AG04450 (cell line): ENCODE measurements at regions of chr12 and their contacts with region 1.

Region 1: DNA sequence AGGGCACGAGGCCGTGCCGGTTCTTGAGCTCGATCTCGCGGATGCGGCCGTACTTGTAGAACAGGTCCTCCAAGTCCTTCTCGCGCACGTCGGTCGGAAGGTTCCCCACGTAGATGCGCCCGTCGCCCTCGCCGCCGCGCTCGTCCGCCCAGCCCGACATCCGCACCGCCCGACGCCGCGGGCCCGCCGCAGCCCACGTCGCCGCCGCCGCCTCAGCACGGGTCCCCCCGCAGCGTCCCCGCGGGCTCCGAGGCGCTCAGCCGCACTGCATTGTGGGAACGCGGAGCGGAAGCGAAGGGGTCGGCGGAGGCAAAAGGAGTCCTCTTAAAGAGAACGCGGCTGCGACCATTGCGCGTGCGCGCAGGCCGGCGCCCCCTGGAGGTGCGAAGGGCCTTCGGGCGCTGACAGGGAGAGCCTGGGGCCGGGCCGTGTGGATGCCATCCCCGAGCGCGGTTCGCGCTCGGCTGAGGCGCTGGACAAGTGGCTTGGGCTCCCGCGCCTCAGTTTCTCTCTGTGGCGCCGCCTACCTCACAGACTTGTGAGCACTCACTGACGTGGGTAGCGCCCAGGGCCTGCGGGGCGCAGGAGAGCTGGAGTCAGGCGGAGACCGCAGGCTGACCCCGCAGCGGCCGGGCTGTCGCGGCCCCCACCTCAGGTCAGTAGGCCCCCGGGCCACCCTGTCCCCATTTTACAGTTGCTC is at the start of gene SRSF9:
- DNase-seq: peak; percentile 93
- H3K4me3 ChIP-seq: peak within 1 kb of the TSS; percentile 93
- H3K27ac ChIP-seq: peak within 1 kb of the TSS; percentile 75
- H3K27me3 ChIP-seq: no peaks in the 10 kb centered on the region
- CTCF ChIP-seq: peak; percentile 88
- polyA plus RNA-seq, gene SRSF9: 127 and 154 TPM in 2 replicates

Region 2: GRCh38 chr12:120457133-120457532 is 12.5 kb before region 1 on chr12:
- CTCF ChIA-PET with region 1: interaction called, 10 read pairs
- POLR2A ChIA-PET with region 1: interaction called, 5 read pairs
- DNase-seq: no peak
- H3K4me3 ChIP-seq: no peak overlapping the region
- H3K27ac ChIP-seq: no peak overlapping the region
- H3K27me3 ChIP-seq: no peaks in the 10 kb centered on the region
- CTCF ChIP-seq: peak; percentile 34; the same call in 1 of the 2 replicates

Region 3: GRCh38 chr12:120495723-120496412 is 26.3 kb after region 1 on chr12 and contains the start of gene DYNLL1:
- CTCF ChIA-PET with region 1: interaction called, 10 read pairs
- POLR2A ChIA-PET with region 1: interaction called, 6 read pairs
- DNase-seq: peak; percentile 91
- H3K4me3 ChIP-seq: peak within 1 kb of the TSS; percentile 87
- H3K27ac ChIP-seq: peak within 1 kb of the TSS; percentile 39
- H3K27me3 ChIP-seq: no peaks in the 10 kb centered on the region
- CTCF ChIP-seq: no peak
- polyA plus RNA-seq, gene DYNLL1: 649 and 720 TPM in 2 replicates